AG04449 (cell line): ENCODE measurements at regions of chr18 and their contacts with region 1.

Region 1: GRCh38 chr18:21191596-21192307 is 50.3 kb upstream of the GREB1L start:
- DNase-seq: no peak
- H3K4me3 ChIP-seq: no peak overlapping the region
- CTCF ChIP-seq: peak; percentile 88

Region 2: DNA sequence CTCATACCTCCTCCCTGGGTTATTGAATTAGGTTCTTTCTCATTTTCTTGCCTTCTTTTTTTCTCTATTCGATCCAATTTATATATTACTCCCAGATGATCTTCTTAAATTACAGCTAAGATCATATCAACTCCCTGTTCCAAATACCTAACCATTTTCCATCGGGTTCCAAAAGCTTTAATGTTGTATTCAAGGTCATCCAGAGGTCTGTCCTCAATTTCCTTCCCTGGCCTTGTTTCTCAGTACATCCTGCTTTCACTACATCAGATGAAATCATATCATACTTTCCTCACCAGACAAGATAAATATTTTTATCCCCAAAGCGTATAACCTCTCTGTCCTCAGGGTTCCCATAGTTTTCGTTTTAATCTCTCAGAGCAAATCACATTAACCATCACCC is 13.9 kb after region 1 on chr18:
- CTCF ChIA-PET with region 1: interaction called, 26 read pairs
- POLR2A ChIA-PET with region 1: no interaction called
- DNase-seq: no peak
- H3K4me3 ChIP-seq: no peak overlapping the region
- CTCF ChIP-seq: no peak

Region 3: GRCh38 chr18:21341141-21341540 is 149.4 kb after region 1 on chr18:
- CTCF ChIA-PET with region 1: no interaction called
- POLR2A ChIA-PET with region 1: no interaction called
- DNase-seq: no peak
- H3K4me3 ChIP-seq: no peak overlapping the region
- CTCF ChIP-seq: no peak

Region 4: DNA sequence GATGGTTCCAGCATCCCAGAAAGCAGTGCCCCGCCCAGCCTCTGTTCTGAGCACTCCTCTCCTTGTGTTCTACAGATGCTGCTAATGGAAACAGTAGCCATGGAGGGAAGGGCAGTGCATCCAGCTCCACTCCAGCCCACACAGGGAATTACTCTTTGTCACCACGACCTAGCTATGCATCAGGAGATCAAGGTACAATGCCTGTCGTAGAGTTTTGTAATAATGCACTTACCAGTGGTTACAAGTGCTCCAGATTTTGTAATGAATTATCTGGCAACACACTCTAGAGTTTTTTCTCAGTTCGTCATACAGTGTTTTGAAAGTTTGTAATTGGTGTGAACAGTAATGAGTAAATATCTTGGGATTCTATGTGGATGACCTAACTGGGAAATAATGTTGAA is 247.7 kb after region 1 on chr18:
- CTCF ChIA-PET with region 1: interaction called, 190 read pairs
- POLR2A ChIA-PET with region 1: no interaction called
- DNase-seq: peak; percentile 69
- H3K4me3 ChIP-seq: no peak overlapping the region
- CTCF ChIP-seq: no peak

Region 5: GRCh38 chr18:21452796-21453510 is 261.2 kb after region 1 on chr18:
- CTCF ChIA-PET with region 1: interaction called, 28 read pairs
- POLR2A ChIA-PET with region 1: no interaction called
- DNase-seq: peak; percentile 34
- H3K4me3 ChIP-seq: no peak overlapping the region
- CTCF ChIP-seq: no peak

Region 6: GRCh38 chr18:21600526-21601410 is 409.0 kb after region 1 on chr18 and contains the start of gene ESCO1:
- CTCF ChIA-PET with region 1: interaction called, 16 read pairs
- POLR2A ChIA-PET with region 1: interaction called, 3 read pairs
- DNase-seq: peak; percentile 90
- H3K4me3 ChIP-seq: peak within 1 kb of the TSS; percentile 99
- CTCF ChIP-seq: peak; percentile 92